ENCODE measurements at regions of chr13 and their contacts with region 1.

Region 1: DNA sequence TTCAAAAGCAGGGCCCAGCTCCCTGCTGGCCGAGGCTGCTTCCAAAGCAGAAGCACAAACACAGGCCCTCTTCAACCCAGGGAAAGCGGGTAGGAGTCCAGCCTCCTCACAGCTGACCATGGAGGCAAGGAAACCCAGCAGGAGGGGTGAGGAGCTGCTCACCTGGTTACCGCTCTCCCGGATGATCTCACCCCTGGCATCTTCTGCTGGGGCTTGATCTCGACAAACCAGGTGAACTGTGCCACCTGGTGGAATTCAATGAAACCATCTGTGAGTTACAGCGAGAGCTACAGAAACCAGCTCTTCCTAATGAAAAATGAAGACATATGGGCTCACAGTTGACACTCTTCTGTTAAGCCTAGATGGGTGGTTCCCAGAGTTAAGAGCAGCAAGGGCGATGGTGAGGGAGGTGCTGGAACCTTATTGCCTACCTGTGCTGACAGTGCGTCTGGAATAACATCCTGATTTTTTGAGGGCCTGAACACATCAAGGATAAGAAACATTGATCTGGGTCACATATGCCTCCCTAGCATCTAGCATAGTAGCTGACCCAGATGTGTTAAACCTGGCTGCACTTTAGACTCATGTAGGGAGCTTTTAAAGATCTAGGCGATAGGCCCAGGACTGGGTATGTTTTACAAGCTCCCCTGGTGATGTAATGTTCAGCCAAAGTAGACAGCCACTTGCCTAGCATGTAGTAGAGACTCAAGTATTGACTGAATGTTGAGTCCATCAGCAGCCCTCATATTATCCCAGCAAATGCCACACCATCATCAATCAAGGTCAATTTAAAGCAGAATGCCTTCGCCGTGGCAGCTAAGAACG is 6.1 kb downstream of the DHRS12 start:
- DNase-seq: peak; percentile 79
- ATAC-seq: peak; percentile 51
- H3K4me3 Mint-ChIP-seq: no peak overlapping the region
- H3K27ac Mint-ChIP-seq: no peak overlapping the region
- H3K4me1 Mint-ChIP-seq: peaks cover 41% of the 10 kb centered on the region
- H3K27me3 Mint-ChIP-seq: no peaks in the 10 kb centered on the region

Region 2: GRCh38 chr13:51125498-51126226 is 672.2 kb before region 1 on chr13:
- CTCF ChIA-PET with region 1: interaction called, 21 read pairs
- POLR2A ChIA-PET with region 1: no interaction called
- intact Hi-C with region 1: loop called (anchors 1 to 10 kb)
- DNase-seq: peak; percentile 74
- ATAC-seq: peak; percentile 82
- H3K4me3 Mint-ChIP-seq: no peak overlapping the region
- H3K27ac Mint-ChIP-seq: no peak overlapping the region
- H3K4me1 Mint-ChIP-seq: peaks cover 11% of the 10 kb centered on the region
- H3K27me3 Mint-ChIP-seq: peaks cover 15% of the 10 kb centered on the region

Region 3: DNA sequence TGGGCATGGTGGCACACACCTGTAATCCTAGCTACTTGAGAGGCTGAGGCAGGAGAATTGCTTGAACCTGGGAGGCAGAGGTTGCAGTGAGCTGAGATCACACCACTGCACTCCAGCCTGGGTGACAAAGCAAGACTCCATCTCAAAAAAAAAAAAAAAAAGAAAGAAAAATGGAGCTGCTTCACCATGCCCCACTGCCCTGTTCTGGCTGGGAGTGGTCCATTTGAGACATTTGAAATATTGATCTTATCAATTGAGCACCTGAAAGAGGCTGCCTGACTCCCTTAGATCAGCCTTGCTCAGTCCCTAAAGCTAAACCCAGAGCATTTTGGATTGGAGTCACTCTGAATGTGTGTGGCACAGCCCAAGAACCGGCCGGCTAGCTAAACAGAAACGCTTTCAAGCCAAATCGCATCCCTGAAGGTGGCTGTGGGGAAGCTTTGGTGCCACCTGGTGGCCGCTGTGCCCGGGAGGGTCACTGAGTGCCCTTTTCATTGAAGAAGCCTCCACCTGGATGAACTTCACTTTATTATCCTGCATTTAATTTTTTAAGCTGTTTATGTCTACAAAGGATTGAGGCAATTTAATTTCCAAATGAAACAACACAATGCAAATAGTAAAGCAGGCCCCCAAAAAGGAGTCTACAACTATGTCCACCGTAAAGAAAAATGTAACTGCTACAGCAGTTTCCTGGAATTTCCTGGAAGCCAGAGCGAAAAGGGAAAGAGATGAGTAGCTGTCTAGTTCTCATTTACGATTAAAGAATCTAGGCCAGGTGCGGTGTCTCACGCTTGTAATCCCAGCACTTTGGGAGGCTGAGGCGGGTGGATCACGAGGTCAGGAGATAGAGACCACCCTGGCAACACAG is 511.5 kb before region 1 on chr13:
- CTCF ChIA-PET with region 1: interaction called, 18 read pairs
- POLR2A ChIA-PET with region 1: no interaction called
- intact Hi-C with region 1: loop called in 1 of 2 experiments (anchors 1 kb)
- DNase-seq: peak; percentile 87
- ATAC-seq: peak; percentile 90
- H3K4me3 Mint-ChIP-seq: no peak overlapping the region
- H3K27ac Mint-ChIP-seq: no peak overlapping the region
- H3K4me1 Mint-ChIP-seq: peaks cover 2% of the 10 kb centered on the region
- H3K27me3 Mint-ChIP-seq: no peaks in the 10 kb centered on the region

Region 4: DNA sequence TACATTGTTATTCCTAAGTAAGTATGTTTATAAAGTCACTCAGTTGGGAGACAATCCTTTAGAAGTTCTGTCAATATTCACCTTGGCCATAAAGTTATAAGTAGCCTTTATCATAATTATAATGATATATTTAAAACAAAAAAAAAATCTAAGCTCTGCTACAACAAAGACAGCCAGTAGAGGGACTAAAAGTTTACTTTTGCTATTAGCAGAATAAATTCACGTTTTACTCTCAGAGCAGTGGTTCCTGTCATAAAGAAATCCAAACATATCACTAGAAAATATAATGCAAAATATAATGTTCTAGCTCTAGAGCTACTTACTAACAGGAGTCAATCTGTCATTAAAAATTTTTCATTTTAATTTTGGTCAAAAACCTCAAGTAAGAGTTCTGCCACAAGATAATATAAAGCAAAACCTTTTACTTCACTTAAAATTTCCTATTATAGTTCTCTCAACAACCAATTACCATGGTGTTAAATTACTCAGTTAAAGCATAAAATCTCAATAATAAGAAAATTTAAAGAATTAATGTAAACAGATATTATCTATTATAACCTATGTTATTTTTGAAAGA is 362.8 kb before region 1 on chr13:
- CTCF ChIA-PET with region 1: interaction called, 52 read pairs
- POLR2A ChIA-PET with region 1: interaction called, 3 read pairs
- intact Hi-C with region 1: loop called in 1 of 2 experiments (anchors 1 kb)
- DNase-seq: no peak
- ATAC-seq: no peak
- H3K4me3 Mint-ChIP-seq: no peak overlapping the region
- H3K27ac Mint-ChIP-seq: no peak overlapping the region
- H3K4me1 Mint-ChIP-seq: peaks cover 14% of the 10 kb centered on the region
- H3K27me3 Mint-ChIP-seq: no peaks in the 10 kb centered on the region

Region 5: DNA sequence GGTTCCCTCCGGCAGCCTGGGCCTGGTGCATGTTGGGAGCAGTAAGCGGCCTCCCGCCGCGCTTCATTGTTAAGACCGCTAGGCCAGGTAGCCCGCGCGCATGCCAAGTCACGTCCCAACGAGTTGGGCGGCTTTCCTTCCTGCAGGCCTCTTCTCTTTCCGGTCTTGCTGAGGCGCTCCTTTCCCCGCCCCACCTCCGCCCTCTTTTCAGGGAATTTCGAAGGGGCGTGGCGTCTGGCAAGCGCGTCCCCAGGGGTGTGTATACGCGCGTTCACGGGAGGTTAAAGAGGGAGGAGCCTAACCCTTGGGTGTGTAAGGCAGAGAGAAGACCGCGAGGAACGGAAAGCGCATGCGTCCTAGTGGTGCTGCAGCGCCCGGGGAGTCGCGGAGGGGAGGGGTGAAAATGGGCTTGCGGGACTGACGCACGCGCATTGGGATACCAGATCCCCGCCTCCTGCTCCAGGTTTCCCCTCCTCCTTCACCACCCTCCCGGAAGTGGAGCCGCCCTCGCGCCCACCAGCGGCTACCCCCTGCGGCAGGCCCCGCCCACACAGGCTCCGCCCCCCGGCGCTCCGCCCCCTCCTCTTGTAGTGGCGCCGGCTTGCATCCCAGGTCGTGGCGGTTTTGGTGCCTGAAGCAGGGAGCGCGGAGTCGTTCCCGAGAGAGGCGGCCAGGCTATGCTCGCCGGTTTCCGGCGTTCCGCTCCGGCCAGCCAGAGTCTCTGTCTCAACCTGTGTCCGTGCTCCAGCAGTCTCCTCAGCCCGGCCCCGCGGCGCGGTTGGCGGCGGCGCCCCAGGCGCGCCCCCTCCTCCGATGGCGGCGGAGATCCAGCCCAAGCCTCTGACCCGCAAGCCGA is 213.8 kb before region 1 on chr13 and contains the start of gene WDFY2:
- CTCF ChIA-PET with region 1: interaction called, 17 read pairs
- POLR2A ChIA-PET with region 1: no interaction called
- intact Hi-C with region 1: loop called (anchors 1 kb)
- DNase-seq: peak; percentile 100
- ATAC-seq: peak; percentile 88
- H3K4me3 Mint-ChIP-seq: peak within 1 kb of the TSS; percentile 89
- H3K27ac Mint-ChIP-seq: peak within 1 kb of the TSS; percentile 95
- H3K4me1 Mint-ChIP-seq: peaks cover 37% of the 10 kb centered on the region
- H3K27me3 Mint-ChIP-seq: no peaks in the 10 kb centered on the region
- total RNA-seq, gene WDFY2: 7.4 to 9.5 TPM

Region 6: DNA sequence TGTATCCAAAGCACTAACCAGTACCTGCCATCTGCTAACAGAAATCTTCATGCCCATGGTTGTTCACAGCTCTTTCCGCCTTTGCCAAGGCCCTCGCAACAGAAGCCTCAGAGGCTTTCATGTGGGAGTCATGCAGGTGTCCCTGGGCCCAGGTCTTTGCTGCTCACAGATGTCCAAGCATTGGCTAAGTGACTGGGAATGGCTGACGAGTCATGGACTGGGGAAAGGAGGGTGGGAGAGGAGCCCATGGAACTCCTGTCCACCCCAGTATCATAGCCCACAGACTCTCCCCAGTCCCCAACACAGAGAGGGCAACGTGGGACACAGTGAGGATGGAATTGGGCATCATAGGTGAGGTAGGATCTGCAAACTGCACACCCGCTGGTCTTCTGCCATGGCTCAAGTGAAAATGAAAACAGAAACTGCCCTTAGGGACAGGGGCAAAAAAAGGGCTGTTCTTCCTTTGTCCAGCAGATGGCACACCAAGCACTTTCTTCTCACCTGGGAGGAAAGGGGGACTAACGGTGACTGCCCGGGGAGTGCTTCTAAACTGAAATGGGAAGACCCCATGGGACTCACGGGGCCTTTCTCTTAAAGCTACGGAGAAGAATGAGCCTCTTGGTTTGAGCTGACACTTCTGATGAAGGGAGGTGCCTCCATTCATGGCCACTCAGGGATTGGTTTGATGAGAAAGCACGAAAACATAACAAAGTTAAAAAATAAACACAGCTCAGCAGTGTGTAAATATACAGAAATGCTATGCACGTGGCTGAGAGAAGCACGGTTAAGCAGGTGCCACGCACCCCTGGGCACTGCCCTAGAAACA is 17.2 kb after region 1 on chr13:
- CTCF ChIA-PET with region 1: interaction called, 14 read pairs
- POLR2A ChIA-PET with region 1: interaction called, 6 read pairs
- intact Hi-C with region 1: no loop called
- DNase-seq: peak; percentile 83
- ATAC-seq: peak; percentile 70
- H3K4me3 Mint-ChIP-seq: peak overlapping the region; percentile 56
- H3K27ac Mint-ChIP-seq: peak overlapping the region; percentile 83
- H3K4me1 Mint-ChIP-seq: peaks cover 81% of the 10 kb centered on the region
- H3K27me3 Mint-ChIP-seq: no peaks in the 10 kb centered on the region